ENCODE measurements at regions of chr10 and their contacts with region 1.

Region 1: DNA sequence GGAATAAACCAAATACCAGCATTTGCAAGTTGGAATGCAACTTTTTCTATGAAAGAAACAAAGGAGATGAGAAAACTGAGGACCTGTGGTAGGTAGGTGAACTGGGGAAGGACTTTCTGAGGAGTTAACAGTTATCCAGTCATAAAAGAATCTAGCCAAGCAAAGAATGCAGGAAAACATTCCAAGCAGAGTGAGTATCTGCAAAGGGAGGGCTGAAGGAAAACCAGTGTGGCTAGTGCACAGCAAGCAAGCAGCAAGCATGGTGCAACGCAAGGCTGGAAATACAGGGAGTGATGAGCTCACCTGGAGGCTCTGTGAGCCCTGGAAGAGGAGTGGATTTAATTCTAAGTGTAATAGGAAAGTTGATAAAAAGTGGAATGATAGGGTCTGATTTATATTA is 44.0 kb downstream of the RTKN2 start:
- DNase-seq: no peak
- ATAC-seq: no peak
- H3K4me3 ChIP-seq: no peak overlapping the region
- H3K27ac ChIP-seq: no peak overlapping the region
- H3K4me1 ChIP-seq: no peaks in the 10 kb centered on the region
- H3K27me3 ChIP-seq: no peaks in the 10 kb centered on the region
- CTCF ChIP-seq: no peak
- POLR2A ChIP-seq: no peak

Region 2: DNA sequence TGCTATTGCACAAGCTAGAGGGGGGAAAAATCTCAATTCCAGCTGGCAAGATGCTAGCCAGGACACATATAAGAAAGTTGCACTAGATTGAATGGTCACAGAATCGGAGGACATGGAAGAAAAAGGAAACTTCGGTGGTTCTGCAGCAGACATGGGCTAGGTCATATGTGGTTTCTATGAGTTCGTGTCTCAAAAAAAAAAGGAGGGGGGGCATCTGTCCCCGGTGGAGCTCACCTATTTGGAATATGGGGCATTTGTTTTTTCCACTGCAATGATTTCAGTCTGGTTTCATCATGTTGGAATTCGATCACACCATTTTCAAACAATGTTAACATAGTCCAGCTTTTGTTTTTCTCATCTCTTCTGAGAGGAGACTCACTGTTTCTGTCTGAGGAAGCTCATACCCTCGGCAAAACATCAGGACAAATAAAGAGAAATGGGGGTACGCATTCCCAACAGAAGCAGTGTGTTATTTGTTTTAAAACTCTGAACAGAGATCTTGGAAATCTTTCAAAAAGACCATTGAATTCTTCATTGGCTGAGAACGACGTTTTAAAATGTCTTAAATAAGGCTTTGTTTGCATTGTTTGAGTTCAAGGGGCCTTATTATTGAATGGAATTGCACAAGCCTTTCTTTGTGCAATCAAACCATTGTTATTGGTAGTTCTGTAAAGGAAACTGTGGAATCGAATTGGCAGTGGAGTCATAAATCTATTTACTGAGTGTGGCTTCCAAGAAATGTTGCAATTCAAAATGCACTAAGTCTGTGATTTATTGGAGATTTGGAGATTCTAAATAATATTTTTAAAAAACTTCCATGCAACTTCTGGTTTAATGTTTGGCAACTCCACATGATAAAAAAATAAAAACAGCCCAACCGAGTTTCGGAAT is 129.2 kb before region 1 on chr10:
- intact Hi-C with region 1: loop called in 1 of 10 experiments (anchors 10 kb)
- DNase-seq: no peak
- ATAC-seq: peak in 1 of 4 donors; percentile 39
- H3K4me3 ChIP-seq: no peak overlapping the region
- H3K27ac ChIP-seq: peak overlapping the region in 11 of 12 donors; percentile 15 to 76 (median 55)
- H3K4me1 ChIP-seq: peaks cover 0 to 49% (median 26%) of the 10 kb centered on the region in 12 donors
- H3K27me3 ChIP-seq: no peaks in the 10 kb centered on the region
- CTCF ChIP-seq: no peak
- POLR2A ChIP-seq: no peak

Region 3: GRCh38 chr10:62109587-62110293 is 114.9 kb before region 1 on chr10:
- intact Hi-C with region 1: loop called in 1 of 10 experiments (anchors 10 kb)
- DNase-seq: no peak
- ATAC-seq: no peak
- H3K4me3 ChIP-seq: no peak overlapping the region
- H3K27ac ChIP-seq: peak overlapping the region in 1 of 12 donors; percentile 40
- H3K4me1 ChIP-seq: peaks cover 0 to 26% (median 0%) of the 10 kb centered on the region in 12 donors
- H3K27me3 ChIP-seq: no peaks in the 10 kb centered on the region
- CTCF ChIP-seq: no peak
- POLR2A ChIP-seq: no peak

Measured in heart left ventricle (tissue), 16 donors.